AG04449 (cell line): ENCODE measurements at regions of chr17 and their contacts with region 1.

Region 1: GRCh38 chr17:79393358-79394202 is 217.3 kb downstream of the RBFOX3 start:
- DNase-seq: no peak
- H3K4me3 ChIP-seq: no peak overlapping the region
- CTCF ChIP-seq: peak; percentile 97

Region 2: GRCh38 chr17:79027925-79028813 is 365.4 kb before region 1 on chr17:
- CTCF ChIA-PET with region 1: interaction called, 34 read pairs
- POLR2A ChIA-PET with region 1: no interaction called
- DNase-seq: no peak
- H3K4me3 ChIP-seq: no peak overlapping the region
- CTCF ChIP-seq: peak; percentile 22

Region 3: DNA sequence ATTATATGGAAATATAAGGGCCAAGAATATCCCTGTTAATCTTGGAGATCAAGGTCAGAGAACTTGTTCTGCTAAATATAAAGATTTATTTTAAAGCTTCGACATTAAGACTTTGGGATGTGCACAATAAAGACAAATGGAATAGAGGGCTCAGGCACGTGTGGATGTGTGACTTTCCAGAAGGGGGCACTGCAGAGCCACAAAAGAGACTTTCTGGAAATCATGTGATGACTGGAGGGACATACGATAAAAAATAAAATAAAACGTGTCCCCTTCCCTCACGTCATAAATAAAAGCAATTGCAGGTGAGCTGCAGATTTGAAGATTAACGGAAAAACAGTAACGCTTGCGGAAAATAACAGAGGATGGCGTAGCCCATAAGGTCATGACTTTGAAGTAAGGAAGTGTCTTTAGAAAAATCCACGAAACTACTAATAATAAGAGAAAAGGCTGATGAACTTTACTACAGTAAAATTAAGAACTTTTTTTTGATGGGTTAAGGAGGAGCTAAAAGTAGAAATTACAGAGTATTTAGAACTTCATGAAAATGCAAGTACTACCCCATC is 328.4 kb before region 1 on chr17:
- CTCF ChIA-PET with region 1: interaction called, 36 read pairs
- POLR2A ChIA-PET with region 1: no interaction called
- DNase-seq: no peak
- H3K4me3 ChIP-seq: no peak overlapping the region
- CTCF ChIP-seq: peak; percentile 40

Region 4: DNA sequence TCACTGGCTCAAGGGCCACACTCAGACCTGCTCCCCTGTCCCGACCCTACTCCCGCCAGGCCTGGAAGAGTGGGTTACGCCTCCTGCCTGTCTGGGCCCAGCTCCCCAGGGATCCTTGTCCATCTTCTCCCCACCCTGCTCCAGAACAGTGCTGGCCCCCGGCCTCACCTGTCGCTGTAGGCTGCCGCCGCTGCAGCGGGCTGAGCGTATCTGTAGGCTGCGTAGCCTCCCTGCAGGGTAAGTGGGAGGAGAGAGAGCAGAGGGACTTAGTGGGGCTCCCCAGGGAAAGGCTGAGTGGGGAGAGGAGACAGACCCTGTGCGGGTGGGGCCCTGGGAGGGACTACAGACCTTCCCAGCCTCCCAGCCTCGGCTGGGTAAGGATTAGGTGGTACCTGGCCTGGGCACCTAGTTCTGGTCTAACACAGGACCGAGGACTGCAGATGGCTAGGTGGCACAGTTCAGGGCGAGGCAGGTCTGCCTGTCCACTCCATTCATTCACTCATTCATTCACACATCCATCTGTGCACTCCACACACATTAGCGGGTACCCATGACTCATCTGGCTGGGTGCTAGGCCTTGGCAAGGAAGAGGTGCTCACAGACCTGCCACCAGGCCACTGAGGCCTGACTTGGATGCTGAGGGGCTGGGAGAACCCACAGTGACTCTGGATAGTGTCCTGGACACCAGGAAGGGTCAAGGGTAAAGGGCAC is 298.1 kb before region 1 on chr17:
- CTCF ChIA-PET with region 1: interaction called, 473 read pairs
- POLR2A ChIA-PET with region 1: no interaction called
- DNase-seq: no peak
- H3K4me3 ChIP-seq: no peak overlapping the region
- CTCF ChIP-seq: no peak

Region 5: DNA sequence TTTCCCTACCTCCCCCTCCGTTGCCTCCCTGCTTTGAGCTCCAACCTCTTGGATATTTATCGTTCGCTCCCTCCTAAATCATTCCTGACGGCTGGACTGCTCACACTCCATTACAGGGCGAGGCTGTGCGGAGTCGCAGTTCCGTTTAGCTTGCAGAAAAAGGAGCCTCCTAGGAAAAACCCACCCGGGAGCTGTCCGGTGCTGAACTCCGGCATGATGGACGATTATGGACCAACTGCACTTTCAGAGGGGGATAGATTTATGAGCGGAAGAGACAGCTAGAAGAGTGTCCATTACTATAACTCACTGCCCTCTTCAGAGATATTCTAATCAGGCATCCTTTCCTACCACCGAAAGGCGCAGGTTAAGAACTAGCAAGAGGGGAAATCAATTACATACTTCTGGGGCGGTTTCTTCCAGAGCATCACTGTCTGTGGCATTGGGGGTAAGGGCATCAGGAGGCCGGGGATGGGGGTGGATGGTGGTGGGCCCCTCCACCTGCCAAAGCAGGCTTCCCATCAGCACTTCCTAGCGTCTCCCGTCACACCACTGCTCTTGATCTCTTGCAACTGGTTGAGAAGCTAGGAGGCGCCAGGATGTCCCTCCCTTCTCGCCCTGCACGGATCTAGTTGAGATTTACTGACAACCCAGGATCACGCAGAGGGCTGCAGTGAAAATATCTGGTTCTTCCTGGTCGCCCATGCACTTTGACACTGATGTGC is 67.7 kb before region 1 on chr17:
- CTCF ChIA-PET with region 1: no interaction called
- POLR2A ChIA-PET with region 1: no interaction called
- DNase-seq: no peak
- H3K4me3 ChIP-seq: no peak overlapping the region
- CTCF ChIP-seq: no peak

Region 6: DNA sequence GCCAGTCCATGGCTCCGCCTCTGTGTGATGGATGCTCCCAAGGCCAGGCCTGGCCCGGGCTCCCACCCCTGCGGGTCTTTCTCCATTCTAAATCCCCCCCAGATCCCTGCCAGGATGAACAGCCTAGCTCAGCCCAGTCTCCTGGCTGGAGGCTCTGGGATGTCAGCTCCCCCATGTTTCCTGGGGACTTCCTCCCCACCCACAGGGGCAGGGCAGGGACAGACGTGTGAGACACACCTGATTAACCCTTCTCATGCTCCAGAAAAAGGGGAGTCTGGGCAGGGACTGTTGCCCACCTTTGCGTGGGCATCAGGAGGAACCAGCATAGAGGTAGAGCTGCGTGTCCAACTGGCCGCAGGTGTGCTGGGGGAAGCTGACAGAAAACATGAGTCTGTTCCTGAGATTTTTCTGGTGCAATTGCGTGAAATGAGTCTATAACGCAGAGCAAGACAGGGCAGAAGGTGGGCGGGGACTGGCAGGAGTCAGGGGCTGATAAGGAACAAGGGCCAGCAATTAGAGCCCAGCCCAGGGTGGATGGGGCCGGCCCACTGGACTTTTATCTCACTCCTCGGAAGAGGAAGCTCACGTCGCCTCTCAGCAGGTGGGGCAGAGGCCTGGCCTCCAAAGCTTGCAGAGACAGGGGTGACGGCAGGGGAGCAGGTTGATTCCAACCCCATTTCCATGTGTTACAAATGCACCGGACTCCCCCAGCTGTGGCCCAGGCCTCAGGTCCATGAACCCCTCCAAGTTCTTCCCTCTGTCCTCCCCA is 20.9 kb before region 1 on chr17:
- CTCF ChIA-PET with region 1: interaction called, 16 read pairs
- POLR2A ChIA-PET with region 1: no interaction called
- DNase-seq: no peak
- H3K4me3 ChIP-seq: no peak overlapping the region
- CTCF ChIP-seq: no peak